Activated B cell treated with CpG ODN at 0.5 μM for 24 hours (primary cell): ENCODE measurements at regions of chr11 and their contacts with region 1.

Region 1: DNA sequence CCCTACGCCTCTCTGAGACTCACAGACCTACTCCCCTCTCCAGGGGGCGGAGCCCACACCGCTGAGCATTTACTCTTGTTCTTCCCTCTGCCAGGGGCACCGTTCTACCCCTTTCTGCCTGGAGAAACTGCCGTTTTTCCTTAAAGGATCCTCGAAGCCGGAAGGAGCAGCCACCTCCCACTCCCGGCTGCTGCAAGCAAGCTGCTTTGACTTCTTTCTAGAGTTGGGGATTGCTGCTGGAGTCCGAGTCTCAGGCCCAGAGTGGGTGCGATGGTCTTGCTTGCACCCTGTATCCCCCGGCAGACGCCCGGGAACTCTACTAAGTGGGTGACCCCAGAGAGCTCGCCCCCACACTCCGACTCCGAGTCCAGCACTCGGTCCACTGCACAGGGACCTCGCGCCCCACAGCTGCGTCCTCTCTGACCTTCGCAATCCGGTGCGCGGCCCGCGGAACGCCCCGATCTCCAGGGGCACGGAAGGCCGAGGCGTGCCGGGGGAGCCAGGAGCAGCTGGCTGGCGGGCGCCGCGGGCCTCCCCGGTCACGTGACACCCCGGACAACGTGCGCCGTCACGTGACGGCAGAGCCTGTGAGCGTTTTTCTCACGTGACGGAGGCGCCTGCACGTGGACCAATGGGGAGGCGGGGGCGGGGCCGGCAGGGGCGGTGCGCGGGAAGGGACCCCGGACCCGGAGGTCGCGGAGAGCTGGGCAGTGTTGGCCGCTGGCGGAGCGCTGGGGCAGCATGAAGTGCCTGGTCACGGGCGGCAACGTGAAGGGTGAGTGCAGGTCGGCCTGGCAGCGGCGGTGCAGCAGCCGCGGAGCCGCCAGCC is at the start of gene RAD9A:
- DNase-seq: peak; percentile 85
- ATAC-seq: peak; percentile 79
- H3K4me3 Mint-ChIP-seq: peak within 1 kb of the TSS; percentile 89
- H3K27ac Mint-ChIP-seq: peak within 1 kb of the TSS; percentile 80
- H3K4me1 Mint-ChIP-seq: peaks cover 40% of the 10 kb centered on the region
- H3K27me3 Mint-ChIP-seq: no peaks in the 10 kb centered on the region
- CTCF ChIP-seq: no peak
- total RNA-seq, gene RAD9A: 30.4 and 35.2 TPM in 2 replicates

Region 2: DNA sequence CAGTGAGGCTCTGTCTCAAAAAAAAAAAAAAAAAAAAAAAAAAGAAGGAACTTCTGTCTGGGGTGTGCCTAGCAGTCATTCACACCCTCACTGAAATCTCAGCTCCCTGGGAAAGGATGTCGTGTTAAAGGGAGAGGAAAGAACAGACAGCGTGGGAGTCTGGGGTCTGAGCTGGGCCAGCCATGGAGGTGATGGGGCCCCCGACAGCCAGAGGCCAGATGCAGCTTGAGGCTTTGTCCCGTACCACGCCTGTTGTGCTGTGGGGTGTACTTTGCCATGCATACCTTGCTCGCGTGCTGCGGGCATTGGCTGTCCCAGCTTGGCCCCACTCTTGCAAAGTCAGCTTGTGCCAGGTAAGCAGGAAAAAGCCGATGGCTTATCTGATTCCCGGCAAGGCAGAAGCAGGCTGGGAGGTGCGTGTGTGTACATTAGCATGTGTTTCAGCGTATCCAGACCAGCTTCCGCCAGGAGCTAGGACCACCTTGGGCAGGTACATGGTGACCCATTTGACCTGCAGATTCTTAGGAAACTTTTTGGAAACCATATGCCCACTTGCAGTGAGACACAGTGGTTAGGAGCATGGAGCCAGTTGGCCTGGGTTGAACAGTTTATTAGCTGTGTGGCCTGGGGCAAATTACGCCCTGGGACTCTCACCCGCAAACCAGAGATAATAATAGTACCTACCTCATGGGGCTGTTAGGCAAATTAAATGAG is 363.9 kb before region 1 on chr11:
- CTCF ChIA-PET with region 1: no interaction called
- POLR2A ChIA-PET with region 1: interaction called, 11 read pairs
- intact Hi-C with region 1: no loop called
- DNase-seq: no peak
- ATAC-seq: peak; percentile 82
- H3K4me3 Mint-ChIP-seq: peak overlapping the region; percentile 11
- H3K27ac Mint-ChIP-seq: no peak overlapping the region
- H3K4me1 Mint-ChIP-seq: peaks cover 54% of the 10 kb centered on the region
- H3K27me3 Mint-ChIP-seq: peaks cover 45% of the 10 kb centered on the region
- CTCF ChIP-seq: no peak

Region 3: DNA sequence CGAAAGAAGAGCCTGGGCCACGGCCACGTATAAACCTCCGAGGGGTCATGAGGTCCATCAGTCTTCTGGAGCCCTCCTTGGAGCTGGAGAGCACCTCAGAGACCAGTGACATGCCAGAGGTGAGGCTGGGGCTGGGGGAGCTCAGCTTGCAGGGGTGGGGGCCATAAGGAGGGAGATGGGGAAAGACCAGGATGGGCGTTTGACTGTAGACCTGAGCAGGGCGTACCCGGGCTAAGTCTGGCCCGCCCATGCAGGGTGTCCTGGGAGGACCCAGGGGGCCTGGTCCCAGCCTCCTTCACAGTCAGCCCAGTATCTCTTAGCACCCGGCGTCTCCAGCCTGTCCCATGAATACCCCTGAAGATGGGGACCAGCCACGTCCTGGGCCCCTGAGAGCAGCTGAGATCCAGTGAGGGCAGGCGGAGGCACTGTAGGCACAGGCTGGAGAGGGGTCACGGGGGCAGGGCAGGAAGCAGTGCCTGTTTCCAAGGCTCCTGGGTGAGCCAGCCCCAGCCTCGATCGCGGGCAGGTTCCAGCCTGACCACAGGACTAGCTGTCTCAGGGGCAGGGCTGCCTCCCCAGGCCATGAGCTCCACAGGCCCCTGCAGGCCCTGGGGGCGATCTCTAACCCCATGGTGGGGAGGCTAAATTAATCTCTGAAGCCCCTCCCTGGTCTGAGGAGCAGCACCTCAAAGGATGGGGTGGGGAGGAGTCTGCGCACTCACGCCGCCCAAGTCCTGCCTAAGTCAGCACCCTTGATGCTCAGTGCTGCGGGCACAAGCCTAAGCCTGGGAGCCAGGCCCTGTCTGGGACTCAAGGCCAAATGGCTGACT is 81.1 kb before region 1 on chr11:
- CTCF ChIA-PET with region 1: no interaction called
- POLR2A ChIA-PET with region 1: no interaction called
- intact Hi-C with region 1: no loop called
- DNase-seq: no peak
- ATAC-seq: no peak
- H3K4me3 Mint-ChIP-seq: no peak overlapping the region
- H3K27ac Mint-ChIP-seq: no peak overlapping the region
- H3K4me1 Mint-ChIP-seq: peaks cover 11% of the 10 kb centered on the region
- H3K27me3 Mint-ChIP-seq: no peaks in the 10 kb centered on the region
- CTCF ChIP-seq: no peak

Region 4: GRCh38 chr11:67409261-67409666 is 17.7 kb after region 1 on chr11:
- CTCF ChIA-PET with region 1: interaction called, 4 read pairs
- POLR2A ChIA-PET with region 1: interaction called, 100 read pairs
- intact Hi-C with region 1: no loop called
- DNase-seq: peak; percentile 61
- ATAC-seq: peak; percentile 63
- H3K4me3 Mint-ChIP-seq: peak overlapping the region; percentile 80
- H3K27ac Mint-ChIP-seq: peak overlapping the region; percentile 95
- H3K4me1 Mint-ChIP-seq: peaks cover 93% of the 10 kb centered on the region
- H3K27me3 Mint-ChIP-seq: no peaks in the 10 kb centered on the region
- CTCF ChIP-seq: no peak

Region 5: DNA sequence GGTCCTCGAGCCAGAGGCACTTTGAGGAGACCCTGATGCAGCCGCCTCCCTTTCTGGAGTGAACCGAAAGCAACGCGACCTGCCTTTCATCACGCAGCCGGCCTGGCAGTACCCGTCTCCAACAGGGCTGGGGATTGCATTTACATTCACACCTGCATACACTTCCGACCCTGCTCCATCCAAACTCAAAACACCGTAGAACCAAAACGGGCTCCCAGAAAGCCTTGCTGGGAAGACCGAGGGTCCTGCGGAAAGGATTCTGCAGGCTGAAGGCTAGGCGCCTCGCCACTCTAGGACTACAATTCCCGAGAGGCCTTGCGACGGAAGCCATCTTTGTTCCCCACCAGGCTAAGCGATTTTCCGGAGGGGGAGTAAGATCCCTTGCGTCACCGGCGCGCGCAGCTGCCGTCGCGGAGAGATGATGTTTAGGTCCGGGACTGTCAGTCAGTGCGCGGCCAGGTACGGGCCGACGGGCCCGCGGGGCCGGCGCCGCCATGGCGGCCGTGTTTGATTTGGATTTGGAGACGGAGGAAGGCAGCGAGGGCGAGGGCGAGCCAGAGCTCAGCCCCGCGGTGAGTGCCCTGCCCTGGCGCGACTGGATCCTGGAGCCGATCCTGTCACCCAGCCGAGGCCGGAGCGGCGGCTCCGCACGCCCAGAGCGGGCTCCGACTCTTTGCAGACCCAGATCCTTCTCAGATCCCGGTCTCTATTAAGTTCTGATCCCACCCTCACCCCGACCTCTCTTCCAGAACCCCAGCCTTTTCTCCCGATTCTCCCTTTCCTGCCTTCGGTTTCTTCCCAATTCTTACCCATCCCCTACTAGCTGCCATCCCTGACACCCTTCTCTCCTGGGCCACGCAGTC is 36.8 kb after region 1 on chr11 and contains the start of gene RPS6KB2:
- CTCF ChIA-PET with region 1: no interaction called
- POLR2A ChIA-PET with region 1: interaction called, 693 read pairs
- intact Hi-C with region 1: loop called (anchors 1 kb)
- DNase-seq: peak; percentile 99
- ATAC-seq: peak; percentile 81
- H3K4me3 Mint-ChIP-seq: peak within 1 kb of the TSS; percentile 98
- H3K27ac Mint-ChIP-seq: peak within 1 kb of the TSS; percentile 93
- H3K4me1 Mint-ChIP-seq: peaks cover 41% of the 10 kb centered on the region
- H3K27me3 Mint-ChIP-seq: no peaks in the 10 kb centered on the region
- CTCF ChIP-seq: no peak
- total RNA-seq, gene RPS6KB2: 66.9 and 74.5 TPM in 2 replicates

Region 6: GRCh38 chr11:67482825-67483798 is 91.6 kb after region 1 on chr11 and contains the start of gene AIP:
- CTCF ChIA-PET with region 1: no interaction called
- POLR2A ChIA-PET with region 1: interaction called, 16 read pairs
- intact Hi-C with region 1: no loop called
- DNase-seq: peak; percentile 87
- ATAC-seq: peak; percentile 85
- H3K4me3 Mint-ChIP-seq: peak within 1 kb of the TSS; percentile 93
- H3K27ac Mint-ChIP-seq: peak within 1 kb of the TSS; percentile 98
- H3K4me1 Mint-ChIP-seq: peaks cover 58% of the 10 kb centered on the region
- H3K27me3 Mint-ChIP-seq: no peaks in the 10 kb centered on the region
- CTCF ChIP-seq: no peak
- total RNA-seq, gene AIP: 108 and 114 TPM in 2 replicates